ENCODE measurements at regions of chr16 and their contacts with region 1.

Region 1: DNA sequence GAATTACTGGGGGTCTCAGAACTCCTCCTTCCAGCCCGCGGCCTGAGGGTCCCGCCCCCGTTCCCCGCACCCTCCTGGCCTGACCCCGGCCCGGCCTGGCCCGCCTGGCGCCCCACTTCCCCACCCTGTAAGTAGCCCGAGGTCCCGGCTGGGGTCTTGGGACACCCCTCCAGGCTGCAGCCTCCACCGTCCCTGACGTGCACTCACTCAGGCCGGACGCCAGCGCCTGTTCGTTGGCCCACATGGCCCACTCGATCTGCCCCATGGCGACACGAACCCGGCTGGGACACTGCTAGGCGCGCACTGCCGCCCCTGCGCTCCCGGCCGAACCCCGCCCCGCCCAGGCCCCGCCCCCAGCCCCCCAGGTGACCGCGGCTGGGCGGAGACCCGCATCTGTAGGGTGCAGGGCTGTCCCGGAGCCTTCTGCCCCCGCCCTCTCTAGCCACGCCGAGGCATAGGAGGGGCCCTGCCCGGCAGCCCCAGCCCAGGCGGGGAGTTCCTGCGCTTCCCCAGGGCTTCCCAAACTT is at the start of gene CYBA:
- DNase-seq: peak; percentile 49
- ATAC-seq: peak; percentile 84
- H3K4me3 ChIP-seq: peak within 1 kb of the TSS; percentile 98
- H3K27ac ChIP-seq: peak within 1 kb of the TSS; percentile 96
- H3K4me1 ChIP-seq: peaks cover 22% of the 10 kb centered on the region
- H3K27me3 ChIP-seq: no peaks in the 10 kb centered on the region
- CTCF ChIP-seq: no peak
- EP300 ChIP-seq: no peak
- POLR2A ChIP-seq: peak; percentile 85
- RAD21 ChIP-seq: no peak
- polyA plus RNA-seq, gene CYBA: 0.55 to 0.66 TPM

Region 2: GRCh38 chr16:87507351-87508069 is 1143.3 kb before region 1 on chr16:
- CTCF ChIA-PET with region 1: no interaction called
- POLR2A ChIA-PET with region 1: no interaction called
- RAD21 ChIA-PET with region 1: no interaction called
- SMC1A ChIA-PET with region 1: no interaction called
- in situ Hi-C with region 1: no loop called
- intact Hi-C with region 1: no loop called
- DNase-seq: no peak
- ATAC-seq: no peak
- H3K4me3 ChIP-seq: no peak overlapping the region
- H3K27ac ChIP-seq: no peak overlapping the region
- H3K4me1 ChIP-seq: no peaks in the 10 kb centered on the region
- H3K27me3 ChIP-seq: peaks cover 2 to 6% of the 10 kb centered on the region in 2 experiments; a peak in 2 of 4 replicates
- CTCF ChIP-seq: no peak
- EP300 ChIP-seq: no peak
- POLR2A ChIP-seq: no peak
- RAD21 ChIP-seq: no peak

Region 3: DNA sequence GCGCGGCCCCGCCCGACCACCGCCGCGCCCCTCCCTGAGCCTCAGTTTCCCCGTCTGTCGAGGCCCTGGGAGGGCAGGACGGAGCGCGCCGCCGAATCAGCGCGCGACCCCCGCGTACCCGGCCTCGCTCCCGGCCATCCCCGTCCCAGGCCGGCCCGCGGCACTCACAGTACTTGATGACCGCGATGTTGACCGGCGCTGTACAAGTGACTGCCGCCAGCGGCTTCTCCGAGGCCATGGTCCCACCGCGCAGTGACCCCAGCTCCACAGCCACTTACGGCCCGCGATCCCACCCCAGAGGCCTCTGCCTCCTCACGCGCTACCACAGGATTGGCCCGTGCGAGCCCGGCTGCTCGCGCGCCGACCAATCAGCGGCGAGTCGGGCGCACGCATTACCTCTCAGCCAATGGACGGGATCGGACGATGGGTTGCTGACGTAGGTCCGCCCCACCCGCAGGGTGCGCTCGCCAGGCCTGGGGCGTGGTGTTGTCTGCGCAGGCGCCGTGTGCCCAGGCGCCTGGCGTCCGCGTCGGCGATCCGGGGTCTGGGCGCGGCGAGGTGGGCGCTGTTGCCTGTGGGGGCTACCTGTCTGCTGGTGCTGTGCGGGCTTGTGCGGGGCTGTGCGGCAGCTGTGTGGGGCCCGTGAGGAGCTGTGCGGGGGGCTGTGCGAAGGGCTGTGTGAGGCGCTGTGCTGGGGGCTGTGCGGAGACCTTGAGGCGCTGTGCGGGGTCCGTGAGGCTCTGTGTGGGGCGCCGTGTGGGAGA is 12.2 kb after region 1 on chr16 and contains the start of gene MVD:
- CTCF ChIA-PET with region 1: interaction called, 3 read pairs
- POLR2A ChIA-PET with region 1: interaction called, 15 read pairs
- RAD21 ChIA-PET with region 1: interaction called, 3 read pairs
- SMC1A ChIA-PET with region 1: no interaction called
- in situ Hi-C with region 1: no loop called
- intact Hi-C with region 1: loop called (anchors 1 kb)
- DNase-seq: peak; percentile 96
- ATAC-seq: peak; percentile 98
- H3K4me3 ChIP-seq: peak within 1 kb of the TSS; percentile 98
- H3K27ac ChIP-seq: peak within 1 kb of the TSS; percentile 83
- H3K4me1 ChIP-seq: peaks cover 6% of the 10 kb centered on the region; the same call in 1 of the 2 replicates
- H3K27me3 ChIP-seq: no peaks in the 10 kb centered on the region
- CTCF ChIP-seq: 0 out of 6 replicates have a peak, but pooled peaks of 1 of the 3 experiments have one; percentile 4
- EP300 ChIP-seq: no peak
- POLR2A ChIP-seq: peak; percentile 95
- RAD21 ChIP-seq: no peak
- polyA plus RNA-seq, gene MVD: 5.0 to 6.8 TPM

Region 4: DNA sequence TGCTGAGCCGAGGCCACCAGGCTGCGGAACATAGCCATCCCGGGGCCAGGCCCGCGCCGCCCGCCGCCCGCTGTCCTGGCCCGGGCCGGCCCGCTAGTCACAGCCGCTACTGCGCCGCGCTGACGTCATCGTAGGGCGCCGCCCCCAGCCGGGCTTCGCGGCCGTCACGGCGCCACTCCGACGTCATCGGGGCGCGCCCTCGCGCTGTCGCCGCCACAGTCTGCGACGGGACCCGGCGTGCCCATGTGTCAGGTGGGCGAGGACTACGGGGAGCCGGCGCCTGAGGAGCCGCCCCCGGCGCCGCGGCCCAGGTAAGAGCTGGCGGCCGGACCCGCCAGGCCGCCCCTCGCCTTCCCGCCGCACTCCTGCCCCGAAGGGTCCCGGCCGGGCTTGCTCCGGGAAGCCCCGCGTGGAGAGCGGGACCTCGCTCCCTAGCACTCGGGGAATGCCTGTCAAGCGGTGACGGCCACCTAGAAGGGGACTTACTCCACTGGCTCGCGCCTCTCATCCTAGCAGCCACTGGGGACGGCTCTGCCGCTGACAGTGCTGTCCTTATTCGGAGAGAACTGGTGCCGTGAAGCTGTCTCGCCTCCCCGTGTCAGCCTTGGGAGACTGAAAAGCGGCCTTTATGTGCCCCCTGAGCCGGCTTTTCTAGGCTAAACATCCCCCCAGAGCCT is 55.6 kb after region 1 on chr16 and contains the starts of genes CTU2 and RNF166:
- CTCF ChIA-PET with region 1: interaction called, 6 read pairs
- POLR2A ChIA-PET with region 1: interaction called, 3 read pairs
- RAD21 ChIA-PET with region 1: interaction called, 3 read pairs
- SMC1A ChIA-PET with region 1: interaction called, 3 read pairs
- in situ Hi-C with region 1: no loop called
- intact Hi-C with region 1: loop called (anchors 2 kb)
- DNase-seq: peak; percentile 32
- ATAC-seq: peak; percentile 69
- H3K4me3 ChIP-seq: peak within 1 kb of the TSS; percentile 90
- H3K27ac ChIP-seq: peak within 1 kb of the TSS; percentile 30
- H3K4me1 ChIP-seq: peaks cover 39% of the 10 kb centered on the region
- H3K27me3 ChIP-seq: no peaks in the 10 kb centered on the region
- CTCF ChIP-seq: no peak
- EP300 ChIP-seq: no peak
- POLR2A ChIP-seq: peak; percentile 75; the same call in 1 of the 2 replicates
- RAD21 ChIP-seq: no peak
- polyA plus RNA-seq, gene CTU2: 0.32 to 4.0 TPM
- polyA plus RNA-seq, gene RNF166: 0.48 to 1.3 TPM

Region 5: GRCh38 chr16:88811769-88812512 is 161.1 kb after region 1 on chr16 and contains the start of gene APRT:
- CTCF ChIA-PET with region 1: no interaction called
- POLR2A ChIA-PET with region 1: interaction called, 3 read pairs
- RAD21 ChIA-PET with region 1: no interaction called
- SMC1A ChIA-PET with region 1: no interaction called
- in situ Hi-C with region 1: no loop called
- intact Hi-C with region 1: loop called (anchors 5 kb)
- DNase-seq: peak; percentile 83
- ATAC-seq: peak; percentile 83
- H3K4me3 ChIP-seq: peak within 1 kb of the TSS; percentile 85
- H3K27ac ChIP-seq: peak within 1 kb of the TSS; percentile 95
- H3K4me1 ChIP-seq: peaks cover 20% of the 10 kb centered on the region
- H3K27me3 ChIP-seq: no peaks in the 10 kb centered on the region
- CTCF ChIP-seq: peak in 2 of 3 experiments; percentile 39 to 56; a peak in 3 of 6 replicates
- EP300 ChIP-seq: no peak
- POLR2A ChIP-seq: peak; percentile 91
- RAD21 ChIP-seq: 0 out of 2 replicates have a peak, but pooled peaks have one; percentile 30
- polyA plus RNA-seq, gene APRT: 30.6 to 100 TPM

Measured in GM12878 (cell line).